ENCODE measurements at regions of chr2 and their contacts with region 1.

Region 1: DNA sequence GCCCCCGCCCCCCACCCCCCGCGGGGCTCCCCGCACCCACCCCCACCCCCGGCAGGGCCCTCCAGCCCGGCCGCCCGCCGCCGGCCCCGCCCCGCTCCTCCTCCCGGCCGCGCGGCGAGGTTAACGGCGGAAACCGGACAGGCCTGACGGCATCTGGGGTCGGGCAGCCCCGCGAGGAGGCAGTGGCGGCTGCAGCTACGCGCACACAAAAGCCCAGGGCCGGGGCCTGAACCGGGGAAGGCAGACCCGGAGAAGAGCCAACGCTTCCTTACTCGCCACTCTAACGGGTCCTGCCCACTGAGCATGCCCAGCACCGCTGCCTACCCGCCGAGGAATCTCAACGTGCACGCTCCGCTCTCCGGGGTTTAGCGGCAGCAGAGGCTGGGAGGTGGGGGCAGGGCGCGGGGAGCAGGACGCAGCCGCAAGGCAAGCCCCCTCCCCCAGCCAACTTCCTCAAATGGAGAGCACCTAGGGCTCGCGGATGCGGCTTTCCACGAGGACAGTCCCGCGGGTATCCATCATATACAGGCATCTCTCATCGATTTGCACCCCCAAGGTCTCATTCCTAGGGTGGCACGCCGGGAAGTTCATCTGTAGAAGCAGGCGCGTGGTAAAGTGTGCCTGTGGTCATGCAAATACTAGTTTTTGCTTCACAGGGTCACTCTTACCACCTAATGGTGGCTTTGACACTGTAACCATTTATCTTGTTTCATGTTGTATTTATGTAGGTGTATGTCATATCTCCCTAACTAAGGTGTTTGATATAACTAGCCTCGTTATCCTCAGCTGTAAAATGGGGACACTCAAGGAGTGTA is at the start of gene MEMO1:
- DNase-seq: peak; percentile 97
- H3K4me3 ChIP-seq: peak within 1 kb of the TSS; percentile 98
- H3K27ac ChIP-seq: peak within 1 kb of the TSS; percentile 89
- H3K4me1 ChIP-seq: peaks cover 14% of the 10 kb centered on the region
- H3K27me3 ChIP-seq: no peaks in the 10 kb centered on the region
- CTCF ChIP-seq: no peak
- total RNA-seq, gene MEMO1: 66.0 and 66.7 TPM in 2 replicates

Region 2: DNA sequence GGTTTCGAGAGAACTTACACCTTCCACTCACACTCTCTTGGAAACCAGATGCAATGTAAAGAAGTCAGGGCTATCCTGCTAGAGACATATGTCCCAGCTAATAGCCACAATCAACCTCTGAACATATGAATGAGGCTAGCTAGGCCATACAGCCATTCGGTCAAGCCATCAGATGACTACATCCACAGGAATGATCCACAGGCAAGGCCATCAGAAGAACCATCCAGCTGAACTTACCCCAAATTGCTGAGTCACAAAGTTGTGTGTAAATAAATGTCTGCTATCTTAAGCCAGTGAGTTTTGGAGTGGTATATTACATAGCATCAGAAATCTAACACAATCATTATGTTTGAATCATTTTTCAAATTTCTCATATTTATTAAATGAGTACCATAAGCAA is 47.3 kb after region 1 on chr2:
- CTCF ChIA-PET with region 1: no interaction called
- POLR2A ChIA-PET with region 1: interaction called, 13 read pairs
- intact Hi-C with region 1: no loop called
- DNase-seq: no peak
- H3K4me3 ChIP-seq: no peak overlapping the region
- H3K27ac ChIP-seq: no peak overlapping the region
- H3K4me1 ChIP-seq: peaks cover 4% of the 10 kb centered on the region
- H3K27me3 ChIP-seq: no peaks in the 10 kb centered on the region
- CTCF ChIP-seq: no peak

Region 3: DNA sequence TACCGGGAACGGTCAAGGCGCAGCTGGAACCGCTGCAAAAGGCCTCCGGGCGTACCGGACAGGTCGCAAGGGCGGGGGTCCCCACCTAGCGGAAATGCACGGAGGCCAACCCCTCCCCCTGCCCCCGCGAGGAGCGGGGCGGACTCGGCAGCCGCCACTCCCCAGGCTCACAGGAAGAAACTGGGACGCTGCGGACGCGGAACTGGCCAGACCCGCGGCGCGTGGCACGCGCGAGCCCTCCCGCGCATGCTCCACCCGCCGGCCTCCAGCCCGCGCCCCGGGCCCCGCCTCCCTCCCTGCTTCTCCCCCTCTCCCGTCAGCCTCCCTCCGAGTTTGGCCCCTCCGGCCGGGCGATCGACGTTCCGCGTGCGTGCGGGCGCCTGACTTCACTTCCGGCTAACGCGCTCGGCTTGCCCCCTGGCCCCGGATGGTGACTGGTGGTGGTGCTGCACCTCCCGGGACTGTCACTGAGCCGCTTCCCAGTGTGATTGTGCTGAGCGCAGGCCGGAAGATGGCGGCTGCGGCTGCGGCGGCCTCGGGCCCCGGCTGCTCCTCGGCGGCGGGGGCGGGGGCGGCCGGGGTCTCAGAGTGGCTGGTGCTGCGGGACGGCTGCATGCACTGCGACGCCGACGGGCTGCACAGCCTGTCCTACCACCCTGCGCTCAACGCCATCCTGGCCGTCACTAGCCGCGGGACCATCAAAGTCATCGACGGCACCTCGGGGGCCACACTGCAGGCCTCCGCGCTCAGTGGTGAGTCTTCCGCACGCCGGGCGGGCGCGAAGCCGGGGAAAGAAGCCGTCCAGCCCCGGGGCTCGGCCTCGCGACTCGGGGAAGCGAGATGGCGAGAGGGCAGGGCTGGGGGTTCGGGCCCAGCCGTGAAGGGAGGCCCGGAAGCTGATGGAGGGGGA is 346.1 kb after region 1 on chr2 and contains the start of gene BIRC6:
- CTCF ChIA-PET with region 1: no interaction called
- POLR2A ChIA-PET with region 1: no interaction called
- intact Hi-C with region 1: loop called (anchors 10 kb)
- DNase-seq: peak; percentile 94
- H3K4me3 ChIP-seq: peak within 1 kb of the TSS; percentile 99
- H3K27ac ChIP-seq: peak within 1 kb of the TSS; percentile 92
- H3K4me1 ChIP-seq: peaks cover 8% of the 10 kb centered on the region
- H3K27me3 ChIP-seq: no peaks in the 10 kb centered on the region
- CTCF ChIP-seq: no peak
- total RNA-seq, gene BIRC6: 73.5 and 75.9 TPM in 2 replicates